Activated T-helper 2 cell treated with anti-CD3 and anti-CD28 coated beads, Interferon-gamma antibody, Interleukin-2, Interleukin-4, amounts not matched to agents 10 μg/mL and 5 μg/mL and 100 μg/mL, durations not matched to agents 14 hours and 24 hours and 36 hours (primary cell): ENCODE measurements at regions of chr13 and their contacts with region 1.

Region 1: DNA sequence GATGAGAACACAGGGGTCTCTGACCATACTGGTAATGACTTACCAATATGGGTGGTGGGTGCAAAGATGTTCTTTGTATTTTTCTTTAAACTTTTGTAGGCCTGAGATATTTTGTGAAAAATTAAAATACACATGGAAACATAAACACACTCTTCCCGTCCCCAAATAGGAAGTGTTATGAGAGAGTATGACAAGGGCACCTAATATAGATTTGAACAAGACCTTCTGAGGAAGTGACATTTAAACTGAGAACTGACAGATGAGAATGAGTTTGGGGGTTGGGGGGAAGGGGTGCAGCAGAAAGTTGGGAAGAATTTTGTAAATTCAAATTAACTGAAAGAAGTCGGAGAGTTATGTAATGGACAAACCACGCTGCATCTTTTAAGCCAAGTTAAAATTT is 224.2 kb downstream of the RGCC start:
- DNase-seq: no peak
- H3K4me3 Mint-ChIP-seq: no peak overlapping the region
- H3K27ac Mint-ChIP-seq: no peak overlapping the region
- H3K4me1 Mint-ChIP-seq: peaks cover 2% of the 10 kb centered on the region
- H3K27me3 Mint-ChIP-seq: no peaks in the 10 kb centered on the region

Region 2: GRCh38 chr13:41746259-41746658 is 64.7 kb after region 1 on chr13:
- intact Hi-C with region 1: loop called (anchors 10 kb)
- DNase-seq: no peak
- H3K4me3 Mint-ChIP-seq: no peak overlapping the region
- H3K27ac Mint-ChIP-seq: no peak overlapping the region
- H3K4me1 Mint-ChIP-seq: no peaks in the 10 kb centered on the region
- H3K27me3 Mint-ChIP-seq: no peaks in the 10 kb centered on the region

Region 3: GRCh38 chr13:42039946-42040729 is 358.6 kb after region 1 on chr13:
- intact Hi-C with region 1: no loop called
- DNase-seq: peak; percentile 80
- H3K4me3 Mint-ChIP-seq: peak overlapping the region; percentile 84
- H3K27ac Mint-ChIP-seq: peak overlapping the region; percentile 67
- H3K4me1 Mint-ChIP-seq: peaks cover 17% of the 10 kb centered on the region
- H3K27me3 Mint-ChIP-seq: peaks cover 38% of the 10 kb centered on the region

Region 4: GRCh38 chr13:42466123-42466522 is 784.5 kb after region 1 on chr13:
- intact Hi-C with region 1: no loop called
- DNase-seq: no peak
- H3K4me3 Mint-ChIP-seq: no peak overlapping the region
- H3K27ac Mint-ChIP-seq: no peak overlapping the region
- H3K4me1 Mint-ChIP-seq: peaks cover 17% of the 10 kb centered on the region
- H3K27me3 Mint-ChIP-seq: no peaks in the 10 kb centered on the region